Activated CD4-positive, alpha-beta T cell treated with anti-CD3 and anti-CD28 coated beads, Interleukin-2, amount 10 ng/mL, durations not matched to agents 24 days and 14 days (primary cell): ENCODE measurements at regions of chr22 and their contacts with region 1.

Region 1: GRCh38 chr22:40728731-40729189 is 49.5 kb downstream of the MCHR1 start:
- DNase-seq: peak; percentile 88
- H3K4me3 Mint-ChIP-seq: peak overlapping the region; percentile 69
- H3K27ac Mint-ChIP-seq: peak overlapping the region; percentile 95
- H3K4me1 Mint-ChIP-seq: peaks cover 41% of the 10 kb centered on the region
- H3K27me3 Mint-ChIP-seq: no peaks in the 10 kb centered on the region

Region 2: DNA sequence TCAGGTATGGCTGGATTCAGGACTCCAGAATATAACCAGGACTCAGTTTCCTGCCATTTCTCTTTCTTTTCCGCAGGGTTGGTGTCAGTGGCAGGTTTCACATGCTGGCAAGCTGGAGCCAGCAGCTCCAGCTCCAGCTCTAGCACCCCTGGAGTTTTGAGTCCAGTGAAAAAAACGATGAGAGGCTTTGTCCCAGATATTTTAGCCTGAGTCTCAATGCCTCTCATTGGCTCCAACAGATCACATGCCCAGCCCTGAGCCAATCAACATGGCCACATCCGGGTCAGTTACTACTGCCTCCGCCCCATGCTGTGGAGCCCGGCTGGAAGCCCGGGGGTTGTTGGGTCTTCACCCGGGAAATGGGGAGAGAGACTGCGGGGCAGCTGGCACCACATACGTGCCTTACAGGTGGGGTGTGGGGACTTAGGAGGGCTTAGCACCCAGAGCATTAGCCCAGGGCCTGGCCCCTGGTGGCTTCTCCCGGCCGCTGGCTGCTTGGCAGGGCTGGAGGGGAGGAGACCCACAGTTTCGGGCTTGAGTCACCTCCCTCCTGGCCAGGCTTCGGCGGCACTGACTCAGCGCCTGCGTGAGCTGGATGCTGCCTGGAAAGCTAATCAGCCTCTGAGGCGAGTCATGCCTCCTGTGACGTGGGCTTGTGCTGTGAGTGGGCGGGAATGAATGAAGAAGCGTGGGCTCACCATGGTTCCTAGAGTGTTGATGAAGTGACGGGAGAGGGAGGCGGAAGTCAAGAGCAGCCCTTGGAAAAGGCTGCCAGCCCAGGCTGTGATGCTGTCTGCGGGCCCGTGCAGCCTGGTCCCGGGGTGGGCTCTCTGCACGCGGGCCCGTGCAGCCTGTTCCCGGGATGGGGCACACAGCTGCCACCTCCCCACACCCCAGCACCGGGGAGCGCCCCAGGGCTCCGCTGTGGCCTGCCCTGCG is 76.9 kb before region 1 on chr22:
- intact Hi-C with region 1: no loop called
- DNase-seq: peak; percentile 91
- H3K4me3 Mint-ChIP-seq: peak overlapping the region; percentile 55
- H3K27ac Mint-ChIP-seq: peak overlapping the region; percentile 85
- H3K4me1 Mint-ChIP-seq: peaks cover 22% of the 10 kb centered on the region
- H3K27me3 Mint-ChIP-seq: no peaks in the 10 kb centered on the region

Region 3: GRCh38 chr22:40764763-40765441 is 36.1 kb after region 1 on chr22:
- intact Hi-C with region 1: loop called (anchors 5 kb)
- DNase-seq: peak; percentile 63
- H3K4me3 Mint-ChIP-seq: peak overlapping the region; percentile 64
- H3K27ac Mint-ChIP-seq: peak overlapping the region; percentile 94
- H3K4me1 Mint-ChIP-seq: peaks cover 16% of the 10 kb centered on the region
- H3K27me3 Mint-ChIP-seq: no peaks in the 10 kb centered on the region

Region 4: GRCh38 chr22:40975366-40975765 is 246.6 kb after region 1 on chr22:
- intact Hi-C with region 1: no loop called
- DNase-seq: no peak
- H3K4me3 Mint-ChIP-seq: no peak overlapping the region
- H3K27ac Mint-ChIP-seq: no peak overlapping the region
- H3K4me1 Mint-ChIP-seq: peaks cover 4% of the 10 kb centered on the region
- H3K27me3 Mint-ChIP-seq: no peaks in the 10 kb centered on the region